Left colon (tissue), 2 donors: ENCODE measurements at regions of chr1 and their contacts with region 1.

Region 1: GRCh38 chr1:43529206-43529731 is 1.4 kb upstream of the PTPRF start:
- DNase-seq: peak; percentile 78 to 92
- ATAC-seq: peak; percentile 39

Region 2: GRCh38 chr1:43137445-43138052 is 391.7 kb before region 1 on chr1:
- intact Hi-C with region 1: no loop called
- DNase-seq: no peak
- ATAC-seq: no peak

Region 3: GRCh38 chr1:43348809-43349583 is 180.3 kb before region 1 on chr1:
- intact Hi-C with region 1: no loop called
- DNase-seq: peak; percentile 94 to 96
- ATAC-seq: peak; percentile 87

Region 4: GRCh38 chr1:43454266-43455011 is 74.8 kb before region 1 on chr1:
- intact Hi-C with region 1: no loop called
- DNase-seq: peak; percentile 79 to 91
- ATAC-seq: peak; percentile 75

Region 5: DNA sequence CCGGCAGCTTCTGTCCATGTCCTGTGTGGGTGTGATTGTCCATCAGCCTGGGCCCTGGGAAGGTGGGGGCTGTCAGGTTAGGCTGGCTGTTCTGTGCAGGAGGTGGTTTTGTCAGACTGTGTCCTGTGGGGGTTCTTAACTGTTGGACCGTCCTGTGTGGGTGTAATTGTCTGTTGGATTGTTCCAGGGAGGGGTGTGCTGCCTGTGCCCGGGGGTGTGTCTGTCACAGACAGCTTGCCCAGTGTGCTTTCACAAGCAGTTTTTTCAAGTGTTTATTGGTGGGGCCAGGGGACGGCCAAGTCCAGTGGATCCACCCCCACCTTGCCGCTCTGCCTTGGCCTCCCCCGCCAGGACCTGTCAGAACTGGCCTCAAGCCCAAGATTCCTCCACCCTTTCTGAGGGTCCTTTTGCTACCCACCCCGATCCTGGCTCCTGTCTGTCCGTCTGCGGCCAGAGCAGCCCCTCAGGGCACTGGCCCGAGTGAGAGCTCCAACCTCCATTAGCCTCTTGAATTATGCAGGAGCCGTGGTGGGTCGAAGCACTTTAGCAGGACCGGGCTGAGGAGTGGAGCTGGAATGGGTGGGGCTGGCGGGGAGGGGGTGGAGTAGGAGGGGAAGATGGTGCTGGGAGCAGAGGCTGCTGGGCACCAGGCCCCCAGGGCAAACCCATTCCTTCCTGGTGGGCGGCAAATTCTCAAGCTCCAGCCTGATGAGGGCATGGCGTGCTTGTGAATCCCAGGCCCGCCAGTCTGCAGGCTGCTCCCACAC is 48.6 kb after region 1 on chr1:
- intact Hi-C with region 1: loop called in 1 of 2 experiments (anchors 5 kb)
- DNase-seq: no peak
- ATAC-seq: no peak

Region 6: DNA sequence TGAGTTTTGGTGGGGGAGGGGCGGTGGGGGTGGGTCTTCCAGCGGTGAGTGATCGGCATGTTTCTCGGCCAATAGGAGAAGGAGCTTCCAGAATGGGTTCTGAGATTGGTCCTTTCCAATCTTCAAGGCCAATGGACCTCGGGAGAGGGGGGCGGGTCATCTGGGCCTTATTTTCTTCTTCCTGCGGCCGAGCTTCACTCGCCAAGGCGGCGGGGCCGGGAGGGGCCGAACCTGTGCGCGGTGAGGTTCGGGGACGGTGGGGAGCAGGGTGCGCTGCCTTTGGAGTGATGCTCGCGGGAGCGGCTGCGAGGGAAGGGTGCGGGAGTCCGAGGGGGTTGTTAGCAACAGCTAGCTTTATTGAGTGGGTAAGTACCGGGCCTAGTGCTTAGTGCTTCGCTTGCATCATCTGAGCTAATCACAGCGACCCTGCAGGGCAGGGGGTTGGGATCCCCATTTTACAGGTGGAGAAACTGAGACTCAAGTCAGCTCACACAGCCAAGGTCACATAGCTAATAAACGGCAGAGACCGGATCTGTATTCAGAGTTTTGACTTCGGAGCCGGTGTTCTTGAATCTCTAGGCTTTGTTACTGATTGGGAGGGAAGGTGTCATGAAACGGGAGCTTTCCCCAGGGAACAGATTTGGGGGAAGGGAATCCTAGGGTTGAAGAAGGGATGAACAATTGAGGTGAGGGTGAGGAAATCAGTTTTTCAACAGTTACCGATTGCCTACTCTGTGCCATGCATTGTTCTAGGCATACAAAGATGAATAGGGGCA is 121.2 kb after region 1 on chr1:
- intact Hi-C with region 1: loop called (anchors 5 to 10 kb)
- DNase-seq: peak; percentile 97 to 98
- ATAC-seq: peak; percentile 76